ENCODE measurements at regions of chr12 and their contacts with region 1.

Region 1: GRCh38 chr12:16359512-16360491 is 12.4 kb downstream of the MGST1 start:
- DNase-seq: peak; percentile 52
- H3K4me3 ChIP-seq: no peak overlapping the region; a peak in 1 of 4 replicates
- H3K27ac ChIP-seq: no peak overlapping the region
- H3K4me1 ChIP-seq: no peaks in the 10 kb centered on the region
- H3K27me3 ChIP-seq: no peaks in the 10 kb centered on the region
- CTCF ChIP-seq: peak; percentile 82
- EP300 ChIP-seq: no peak
- RAD21 ChIP-seq: peak; percentile 67

Region 2: GRCh38 chr12:16335838-16336237 is 24.0 kb before region 1 on chr12:
- CTCF ChIA-PET with region 1: no interaction called
- POLR2A ChIA-PET with region 1: no interaction called
- DNase-seq: no peak
- H3K4me3 ChIP-seq: no peak overlapping the region
- H3K27ac ChIP-seq: no peak overlapping the region
- H3K4me1 ChIP-seq: no peaks in the 10 kb centered on the region
- H3K27me3 ChIP-seq: no peaks in the 10 kb centered on the region
- CTCF ChIP-seq: no peak
- EP300 ChIP-seq: no peak
- RAD21 ChIP-seq: no peak

Region 3: DNA sequence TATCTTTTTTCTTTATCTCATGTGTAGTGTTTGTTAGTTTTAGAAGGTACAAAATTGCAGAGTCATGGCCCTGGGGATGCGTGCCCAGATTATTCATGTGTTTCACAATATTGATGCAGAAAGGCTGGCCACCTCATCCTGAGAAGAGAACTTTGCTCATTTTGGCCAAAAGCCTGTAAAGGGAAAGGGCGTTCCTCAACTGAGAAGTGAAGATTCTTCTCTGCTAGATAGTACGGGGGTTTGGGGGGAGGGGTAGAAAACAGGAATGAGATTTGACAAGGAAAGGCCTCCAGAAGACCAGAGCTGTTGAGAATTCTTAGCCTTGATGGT is 10.7 kb before region 1 on chr12:
- CTCF ChIA-PET with region 1: interaction called, 10 read pairs
- POLR2A ChIA-PET with region 1: no interaction called
- DNase-seq: no peak
- H3K4me3 ChIP-seq: no peak overlapping the region
- H3K27ac ChIP-seq: no peak overlapping the region
- H3K4me1 ChIP-seq: no peaks in the 10 kb centered on the region
- H3K27me3 ChIP-seq: no peaks in the 10 kb centered on the region
- CTCF ChIP-seq: no peak
- EP300 ChIP-seq: no peak
- RAD21 ChIP-seq: no peak

Measured in SK-N-SH (cell line).